Head of caudate nucleus (tissue), 42 donors: ENCODE measurements at regions of chr9 and their contacts with region 1.

Region 1: GRCh38 chr9:122810306-122810946 is 10.5 kb downstream of the OR1K1 start:
- DNase-seq: peak; percentile 31 to 92 (median 81)

Region 2: GRCh38 chr9:122092611-122093506 is 717.6 kb before region 1 on chr9 and contains the start of gene TTLL11:
- intact Hi-C with region 1: loop called (anchors 10 kb)
- DNase-seq: peak; percentile 96 to 100 (median 99)

Region 3: DNA sequence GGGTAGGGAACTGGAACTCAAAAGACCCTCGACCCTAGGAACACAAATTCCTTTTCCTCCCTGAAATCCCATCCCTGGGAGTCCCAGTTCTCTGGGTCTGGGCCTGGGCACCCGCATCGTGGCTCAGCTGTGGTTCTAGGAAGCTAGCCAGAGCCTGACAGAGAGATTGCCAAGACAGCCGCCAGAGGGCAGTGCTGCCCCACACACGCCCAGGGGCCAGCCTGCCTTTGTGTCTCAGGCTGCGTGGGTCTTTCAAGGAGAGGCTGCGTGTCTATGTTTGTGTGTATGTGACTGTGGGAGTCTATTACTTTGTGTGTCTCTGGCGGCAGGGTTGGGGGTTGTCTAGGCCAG is 685.3 kb before region 1 on chr9:
- intact Hi-C with region 1: loop called (anchors 10 kb)
- DNase-seq: peak; percentile 80 to 95 (median 91)

Region 4: DNA sequence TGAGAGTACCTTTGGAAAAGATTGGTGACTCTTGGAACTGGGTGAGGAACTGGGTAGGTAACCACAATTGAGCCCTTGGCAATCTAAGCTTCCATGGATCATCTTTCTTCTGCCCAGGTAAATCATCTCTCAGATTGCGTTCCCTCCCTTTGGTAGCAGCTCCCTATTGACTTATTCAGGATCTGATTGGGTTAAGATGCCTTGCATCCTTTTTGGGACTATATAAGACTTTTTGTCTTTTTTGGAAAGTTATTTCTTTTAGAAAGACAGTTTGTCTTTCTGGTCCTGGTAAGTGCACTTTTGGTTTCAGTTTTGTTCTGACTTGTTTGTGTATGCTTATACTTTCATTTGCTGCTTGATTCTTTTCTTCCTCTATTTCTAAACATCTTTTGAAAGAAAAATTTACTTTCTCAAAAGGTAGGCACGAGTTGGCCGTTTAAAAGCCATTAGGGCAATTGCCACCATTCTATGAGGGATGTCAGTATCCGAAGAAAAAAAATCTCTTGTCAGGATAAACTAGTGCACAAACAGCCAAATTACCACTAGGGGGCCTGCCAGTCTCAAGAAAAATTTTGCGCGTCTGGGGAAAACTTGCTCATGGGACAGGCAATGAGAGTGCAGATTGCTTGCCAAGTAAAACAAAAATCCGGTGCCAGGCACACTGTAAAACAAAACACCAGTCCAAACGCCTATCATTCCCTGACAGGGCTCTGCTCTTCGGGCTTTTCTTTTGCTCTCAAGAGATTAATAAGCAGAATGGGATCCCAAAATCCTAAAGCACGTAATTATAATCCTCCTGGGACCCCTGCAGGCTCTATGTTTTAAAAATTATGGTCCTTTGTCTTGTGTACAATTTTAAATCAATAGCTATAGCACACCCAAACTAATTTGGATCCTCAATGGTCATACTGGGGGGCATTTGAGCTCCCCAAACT is 345.5 kb before region 1 on chr9:
- intact Hi-C with region 1: loop called (anchors 5 kb)
- DNase-seq: peak; percentile 40 to 90 (median 76)

Region 5: DNA sequence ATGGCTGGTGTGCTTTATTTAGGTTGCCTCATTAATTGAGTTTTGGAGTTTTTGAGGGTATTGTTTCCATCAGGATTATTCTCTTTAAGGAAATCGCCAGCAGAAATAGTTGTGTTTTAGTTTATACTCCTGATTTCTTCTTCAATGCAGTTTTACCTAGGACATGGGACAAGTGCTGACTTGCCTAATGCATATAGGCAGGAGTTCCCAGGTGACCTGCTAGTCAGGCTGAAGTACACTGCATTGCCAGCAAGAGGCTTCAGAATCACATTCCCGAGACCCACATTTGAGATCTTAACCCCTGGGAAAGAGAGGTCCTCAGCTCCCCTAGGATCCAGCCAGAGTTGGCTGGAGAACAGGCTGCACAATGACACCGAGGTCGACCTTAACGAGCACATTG is 259.1 kb before region 1 on chr9:
- intact Hi-C with region 1: no loop called
- DNase-seq: no peak

Region 6: DNA sequence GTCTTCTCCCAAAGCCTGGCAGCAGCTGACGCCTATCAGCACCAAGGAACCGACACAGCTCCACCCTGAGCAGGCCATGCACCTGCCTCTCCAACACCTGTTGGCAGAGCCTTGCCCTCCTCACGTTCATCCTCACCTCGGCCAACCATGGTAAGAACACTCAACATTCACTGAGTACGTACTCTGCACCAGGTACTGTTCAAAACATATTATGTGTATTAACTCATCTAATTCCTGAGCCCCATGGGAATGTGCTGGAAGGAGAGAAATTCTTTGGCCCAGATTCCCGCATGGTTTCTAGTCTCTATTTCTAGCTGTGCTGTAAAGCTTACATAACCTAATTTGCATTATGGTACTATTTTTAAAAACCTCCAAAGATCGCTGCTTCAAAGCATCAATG is 309.1 kb after region 1 on chr9:
- intact Hi-C with region 1: no loop called
- DNase-seq: peak in 6 of 42 donors; percentile 47 to 76 (median 56)